HepG2 (cell line): ENCODE measurements at regions of chr17 and their contacts with region 1.

Region 1: GRCh38 chr17:60971515-60972369 is 294.1 kb downstream of the BCAS3 start:
- DNase-seq: peak; percentile 56
- ATAC-seq: peak; percentile 94
- H3K4me3 ChIP-seq: no peak overlapping the region
- H3K27ac ChIP-seq: no peak overlapping the region
- H3K4me1 ChIP-seq: no peaks in the 10 kb centered on the region
- H3K27me3 ChIP-seq: no peaks in the 10 kb centered on the region
- CTCF ChIP-seq: peak; percentile 89
- EP300 ChIP-seq: no peak
- POLR2A ChIP-seq: no peak
- RAD21 ChIP-seq: peak; percentile 73

Region 2: GRCh38 chr17:60720763-60721531 is 250.8 kb before region 1 on chr17:
- CTCF ChIA-PET with region 1: no interaction called
- POLR2A ChIA-PET with region 1: no interaction called
- in situ Hi-C with region 1: no loop called
- intact Hi-C with region 1: loop called (anchors 2 kb)
- DNase-seq: peak; percentile 64
- ATAC-seq: peak; percentile 70
- H3K4me3 ChIP-seq: no peak overlapping the region
- H3K27ac ChIP-seq: no peak overlapping the region
- H3K4me1 ChIP-seq: no peaks in the 10 kb centered on the region
- H3K27me3 ChIP-seq: no peaks in the 10 kb centered on the region
- CTCF ChIP-seq: peak; percentile 88
- EP300 ChIP-seq: no peak
- POLR2A ChIP-seq: no peak
- RAD21 ChIP-seq: peak; percentile 89

Region 3: DNA sequence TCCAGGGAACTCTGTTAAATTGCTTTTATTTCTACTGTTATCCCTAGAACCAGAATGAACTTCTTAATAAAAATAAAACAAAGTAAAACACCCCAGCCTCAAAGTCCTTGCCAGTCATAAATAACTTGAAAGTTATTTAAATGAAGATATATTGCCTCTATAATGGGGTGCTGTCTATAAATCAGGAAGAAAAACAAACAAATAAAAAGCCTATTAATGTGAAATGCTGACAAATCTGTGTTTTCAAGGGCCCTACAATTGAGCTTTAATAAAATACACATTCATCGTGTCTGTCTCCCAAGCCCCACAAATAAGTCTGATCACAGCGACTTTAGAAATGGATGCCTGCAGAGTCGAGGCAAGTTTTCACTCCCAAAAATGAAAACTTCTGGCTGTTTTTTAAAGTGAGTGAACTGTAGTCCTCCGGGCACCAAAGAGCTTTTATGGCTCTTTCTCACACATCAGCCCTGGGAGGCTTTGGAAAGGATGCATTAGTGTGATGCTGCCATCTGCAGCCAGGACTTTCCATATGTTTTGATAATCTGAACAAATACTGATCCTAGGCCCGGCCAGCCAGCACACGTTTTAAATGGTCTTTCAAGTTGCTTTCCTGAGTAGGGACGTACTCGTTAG is 602.9 kb after region 1 on chr17:
- CTCF ChIA-PET with region 1: no interaction called
- POLR2A ChIA-PET with region 1: no interaction called
- in situ Hi-C with region 1: loop called (anchors 10 kb)
- intact Hi-C with region 1: no loop called
- DNase-seq: peak; percentile 80
- ATAC-seq: peak; percentile 99
- H3K4me3 ChIP-seq: no peak overlapping the region
- H3K27ac ChIP-seq: no peak overlapping the region
- H3K4me1 ChIP-seq: peaks cover 18% of the 10 kb centered on the region
- H3K27me3 ChIP-seq: no peaks in the 10 kb centered on the region
- CTCF ChIP-seq: peak; percentile 88
- EP300 ChIP-seq: no peak
- POLR2A ChIP-seq: no peak
- RAD21 ChIP-seq: peak; percentile 71; the same call in 1 of the 2 replicates

Region 4: GRCh38 chr17:61583242-61583641 is 611.5 kb after region 1 on chr17:
- CTCF ChIA-PET with region 1: interaction called, 3 read pairs
- POLR2A ChIA-PET with region 1: no interaction called
- in situ Hi-C with region 1: loop called (anchors 10 kb)
- intact Hi-C with region 1: loop called (anchors 10 kb)
- DNase-seq: peak; percentile 74
- ATAC-seq: peak; percentile 56
- H3K4me3 ChIP-seq: no peak overlapping the region
- H3K27ac ChIP-seq: no peak overlapping the region
- H3K4me1 ChIP-seq: peaks cover 53% of the 10 kb centered on the region
- H3K27me3 ChIP-seq: no peaks in the 10 kb centered on the region
- CTCF ChIP-seq: peak; percentile 55
- EP300 ChIP-seq: no peak
- POLR2A ChIP-seq: no peak
- RAD21 ChIP-seq: no peak